WTC11 (cell line): ENCODE measurements at regions of chr19 and their contacts with region 1.

Region 1: GRCh38 chr19:10259162-10259905 is 7.3 kb downstream of the MRPL4 start:
- DNase-seq: peak; percentile 96
- ATAC-seq: peak; percentile 91
- H3K4me3 Mint-ChIP-seq: no peak overlapping the region
- H3K27ac Mint-ChIP-seq: no peak overlapping the region
- H3K4me1 Mint-ChIP-seq: no peaks in the 10 kb centered on the region
- H3K27me3 Mint-ChIP-seq: peaks cover 3% of the 10 kb centered on the region; the same call in 1 of the 2 replicates
- CTCF ChIP-seq: peak; percentile 52

Region 2: DNA sequence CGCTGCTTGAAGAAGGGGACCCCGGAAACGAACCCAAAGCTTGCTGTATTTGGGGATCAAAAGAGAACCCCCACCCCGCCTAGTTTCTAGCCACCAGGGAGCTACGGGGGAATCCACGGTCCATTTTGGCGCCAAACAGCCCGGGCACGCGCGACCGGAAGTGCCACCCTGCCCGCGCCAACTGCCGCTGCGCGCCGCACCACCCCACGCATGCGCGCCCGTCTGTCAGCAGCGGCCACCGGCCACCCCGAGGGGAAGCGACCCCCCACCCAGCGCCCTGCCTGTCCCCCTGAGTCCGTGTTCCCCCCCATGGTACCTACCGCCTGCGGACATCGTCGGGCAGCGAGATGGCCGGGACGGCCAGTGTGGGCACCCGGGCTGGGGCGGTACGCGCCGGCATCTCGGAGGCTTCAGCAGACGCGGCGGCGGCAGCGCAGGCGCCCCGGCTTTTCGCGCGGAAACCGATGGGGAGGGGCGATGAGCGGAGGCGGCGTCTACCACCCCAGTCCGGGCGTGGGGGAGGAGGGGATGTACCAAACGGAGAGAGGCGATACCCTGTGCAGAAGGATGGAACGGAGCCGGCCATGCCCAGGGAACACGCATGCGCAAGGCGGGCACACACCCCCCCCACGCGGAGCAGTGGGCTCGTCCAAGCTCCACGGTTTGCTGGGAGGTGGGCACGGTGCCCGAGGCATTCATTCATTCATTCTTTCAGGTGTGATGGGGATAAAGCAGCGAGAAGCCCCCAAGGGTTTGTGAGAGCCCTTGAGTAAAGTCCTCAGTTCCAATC is 64.6 kb before region 1 on chr19 and contains the start of gene DNMT1:
- CTCF ChIA-PET with region 1: no interaction called
- POLR2A ChIA-PET with region 1: no interaction called
- DNase-seq: peak; percentile 97
- ATAC-seq: peak; percentile 98
- H3K4me3 Mint-ChIP-seq: peak within 1 kb of the TSS; percentile 94
- H3K27ac Mint-ChIP-seq: peak within 1 kb of the TSS; percentile 85
- H3K4me1 Mint-ChIP-seq: peaks cover 8% of the 10 kb centered on the region
- H3K27me3 Mint-ChIP-seq: no peaks in the 10 kb centered on the region
- CTCF ChIP-seq: no peak
- total RNA-seq, gene DNMT1: 174 to 210 TPM (median 191 TPM) in 3 replicates

Region 3: GRCh38 chr19:10219678-10220077 is 39.7 kb before region 1 on chr19:
- CTCF ChIA-PET with region 1: interaction called, 12 read pairs
- POLR2A ChIA-PET with region 1: no interaction called
- DNase-seq: peak; percentile 57
- ATAC-seq: peak; percentile 89
- H3K4me3 Mint-ChIP-seq: no peak overlapping the region
- H3K27ac Mint-ChIP-seq: no peak overlapping the region
- H3K4me1 Mint-ChIP-seq: no peaks in the 10 kb centered on the region
- H3K27me3 Mint-ChIP-seq: no peaks in the 10 kb centered on the region
- CTCF ChIP-seq: 0 out of 2 replicates have a peak, but pooled peaks have one; percentile 22

Region 4: DNA sequence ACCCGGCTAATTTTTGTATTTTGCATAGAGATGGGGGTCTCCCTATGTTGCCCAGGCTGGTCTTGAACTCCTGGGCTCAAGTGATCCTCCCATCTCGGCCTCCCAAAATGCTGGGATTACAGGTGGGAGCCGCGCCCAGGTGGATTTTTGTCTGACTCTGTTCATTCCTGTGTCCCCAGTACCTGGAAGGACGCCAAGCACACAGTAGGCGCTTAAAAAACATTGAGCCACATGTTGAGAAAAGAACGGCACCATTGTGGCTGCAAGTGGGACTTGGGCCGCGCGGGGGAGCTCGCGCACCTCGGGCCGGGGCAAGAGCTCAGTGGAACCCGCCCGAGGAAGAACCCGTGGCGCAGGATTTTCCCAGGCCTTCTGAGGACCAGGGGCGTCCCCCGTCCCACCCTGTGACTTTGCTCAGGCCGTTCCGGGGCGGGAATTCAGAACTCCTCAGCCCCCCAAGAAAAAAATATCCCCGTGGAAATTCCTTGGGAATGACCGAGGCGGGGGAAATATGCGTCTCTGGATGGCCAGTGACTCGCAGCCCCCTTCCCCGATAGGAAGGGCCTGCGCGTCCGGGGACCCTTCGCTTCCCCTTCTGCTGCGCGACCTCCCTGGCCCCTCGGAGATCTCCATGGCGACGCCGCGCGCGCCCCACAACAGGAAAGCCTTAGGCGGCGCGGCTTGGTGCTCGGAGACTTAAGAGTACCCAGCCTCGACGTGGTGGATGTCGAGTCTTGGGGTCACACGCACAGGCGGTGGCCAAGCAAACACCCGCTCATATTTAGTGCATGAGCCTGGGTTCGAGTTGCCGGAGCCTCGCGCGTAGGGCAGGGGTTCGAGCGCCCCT is 10.2 kb after region 1 on chr19:
- CTCF ChIA-PET with region 1: interaction called, 107 read pairs
- POLR2A ChIA-PET with region 1: interaction called, 12 read pairs
- DNase-seq: peak; percentile 93
- ATAC-seq: peak; percentile 69
- H3K4me3 Mint-ChIP-seq: peak overlapping the region; percentile 68
- H3K27ac Mint-ChIP-seq: no peak overlapping the region
- H3K4me1 Mint-ChIP-seq: 0 out of 2 replicates have a peak, but pooled peaks cover 4% of the 10 kb centered on the region
- H3K27me3 Mint-ChIP-seq: peaks cover 46% of the 10 kb centered on the region
- CTCF ChIP-seq: peak; percentile 84

Region 5: GRCh38 chr19:10292206-10292788 is 33.0 kb after region 1 on chr19:
- CTCF ChIA-PET with region 1: interaction called, 32 read pairs
- POLR2A ChIA-PET with region 1: interaction called, 3 read pairs
- DNase-seq: peak; percentile 99
- ATAC-seq: peak; percentile 73
- H3K4me3 Mint-ChIP-seq: peak overlapping the region; percentile 82
- H3K27ac Mint-ChIP-seq: no peak overlapping the region
- H3K4me1 Mint-ChIP-seq: peaks cover 39% of the 10 kb centered on the region
- H3K27me3 Mint-ChIP-seq: peaks cover 98% of the 10 kb centered on the region
- CTCF ChIP-seq: no peak

Region 6: DNA sequence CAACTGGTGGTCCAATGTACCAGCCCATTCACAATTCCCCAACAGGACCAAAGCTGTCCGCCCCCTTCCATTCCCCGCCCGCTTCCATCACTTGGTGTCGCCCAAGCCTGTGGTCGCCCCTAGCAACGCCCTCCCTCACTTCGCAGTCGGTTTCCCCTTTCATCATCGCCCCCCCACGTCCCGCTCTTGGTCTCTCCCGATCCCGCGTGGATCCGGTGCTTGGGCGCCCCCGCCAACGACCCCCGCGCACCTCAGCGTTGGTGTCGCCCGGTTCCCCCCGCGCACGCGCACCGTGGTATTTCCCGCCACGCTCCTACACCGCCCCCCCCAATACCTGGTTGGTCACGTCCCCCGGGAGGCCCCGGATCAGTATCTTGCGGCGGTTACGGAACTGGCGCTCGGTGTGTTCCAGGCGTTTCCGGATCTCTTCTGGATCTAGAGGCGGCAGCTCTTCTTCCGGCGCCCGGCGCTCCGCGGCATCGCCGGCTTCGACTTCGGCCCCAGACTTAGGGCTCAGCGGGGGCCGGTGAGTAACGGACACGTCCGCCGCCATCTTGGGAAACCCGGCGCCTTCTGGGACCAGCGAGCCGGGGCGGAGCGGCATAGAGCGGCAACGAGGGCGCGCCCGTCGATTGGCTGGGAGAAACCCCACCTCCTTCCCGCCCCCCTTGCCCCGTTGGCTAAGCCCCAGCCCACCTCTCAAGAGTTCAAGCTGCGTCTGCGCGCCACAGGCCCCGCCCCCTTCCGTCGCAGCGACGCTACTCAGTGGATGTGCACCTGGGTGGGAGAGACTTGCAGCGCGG is 73.8 kb after region 1 on chr19 and contains the start of gene RAVER1:
- CTCF ChIA-PET with region 1: interaction called, 32 read pairs
- POLR2A ChIA-PET with region 1: interaction called, 8 read pairs
- DNase-seq: peak; percentile 98
- ATAC-seq: peak; percentile 91
- H3K4me3 Mint-ChIP-seq: peak within 1 kb of the TSS; percentile 93
- H3K27ac Mint-ChIP-seq: peak within 1 kb of the TSS; percentile 90
- H3K4me1 Mint-ChIP-seq: peaks cover 16% of the 10 kb centered on the region
- H3K27me3 Mint-ChIP-seq: peaks cover 10% of the 10 kb centered on the region
- CTCF ChIP-seq: no peak
- total RNA-seq, gene RAVER1: 85.8 to 87.4 TPM (median 86.9 TPM) in 3 replicates

Region 7: DNA sequence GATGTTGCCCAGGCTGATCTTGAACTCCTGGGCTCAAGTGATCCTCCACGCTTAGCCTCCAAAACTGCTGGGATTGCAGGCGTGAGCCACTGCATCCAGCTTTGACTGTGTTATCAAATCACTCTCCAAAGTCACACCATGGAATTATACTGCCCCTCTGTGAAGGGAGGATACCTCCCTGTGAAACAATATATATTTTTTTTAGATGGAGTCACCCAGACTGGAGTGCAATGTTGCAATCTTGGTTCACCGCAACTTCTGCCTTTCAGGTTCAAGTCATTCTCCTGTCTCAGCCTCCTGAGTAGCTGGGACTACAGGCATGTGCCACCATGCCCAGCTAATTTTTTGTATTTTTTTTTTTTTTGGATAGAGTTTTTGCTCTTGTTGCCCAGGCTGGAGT is 113.4 kb after region 1 on chr19:
- CTCF ChIA-PET with region 1: interaction called, 13 read pairs
- POLR2A ChIA-PET with region 1: no interaction called
- DNase-seq: no peak
- ATAC-seq: no peak
- H3K4me3 Mint-ChIP-seq: no peak overlapping the region
- H3K27ac Mint-ChIP-seq: no peak overlapping the region
- H3K4me1 Mint-ChIP-seq: no peaks in the 10 kb centered on the region
- H3K27me3 Mint-ChIP-seq: no peaks in the 10 kb centered on the region
- CTCF ChIP-seq: no peak

Region 8: GRCh38 chr19:10388957-10389356 is 129.6 kb after region 1 on chr19:
- CTCF ChIA-PET with region 1: interaction called, 149 read pairs
- POLR2A ChIA-PET with region 1: interaction called, 5 read pairs
- DNase-seq: peak; percentile 96
- ATAC-seq: peak; percentile 73
- H3K4me3 Mint-ChIP-seq: no peak overlapping the region
- H3K27ac Mint-ChIP-seq: no peak overlapping the region
- H3K4me1 Mint-ChIP-seq: peaks cover 5% of the 10 kb centered on the region; the same call in 1 of the 2 replicates
- H3K27me3 Mint-ChIP-seq: peaks cover 3% of the 10 kb centered on the region; the same call in 1 of the 2 replicates
- CTCF ChIP-seq: peak; percentile 90